ENCODE measurements at regions of chr7 and their contacts with region 1.

Region 1: DNA sequence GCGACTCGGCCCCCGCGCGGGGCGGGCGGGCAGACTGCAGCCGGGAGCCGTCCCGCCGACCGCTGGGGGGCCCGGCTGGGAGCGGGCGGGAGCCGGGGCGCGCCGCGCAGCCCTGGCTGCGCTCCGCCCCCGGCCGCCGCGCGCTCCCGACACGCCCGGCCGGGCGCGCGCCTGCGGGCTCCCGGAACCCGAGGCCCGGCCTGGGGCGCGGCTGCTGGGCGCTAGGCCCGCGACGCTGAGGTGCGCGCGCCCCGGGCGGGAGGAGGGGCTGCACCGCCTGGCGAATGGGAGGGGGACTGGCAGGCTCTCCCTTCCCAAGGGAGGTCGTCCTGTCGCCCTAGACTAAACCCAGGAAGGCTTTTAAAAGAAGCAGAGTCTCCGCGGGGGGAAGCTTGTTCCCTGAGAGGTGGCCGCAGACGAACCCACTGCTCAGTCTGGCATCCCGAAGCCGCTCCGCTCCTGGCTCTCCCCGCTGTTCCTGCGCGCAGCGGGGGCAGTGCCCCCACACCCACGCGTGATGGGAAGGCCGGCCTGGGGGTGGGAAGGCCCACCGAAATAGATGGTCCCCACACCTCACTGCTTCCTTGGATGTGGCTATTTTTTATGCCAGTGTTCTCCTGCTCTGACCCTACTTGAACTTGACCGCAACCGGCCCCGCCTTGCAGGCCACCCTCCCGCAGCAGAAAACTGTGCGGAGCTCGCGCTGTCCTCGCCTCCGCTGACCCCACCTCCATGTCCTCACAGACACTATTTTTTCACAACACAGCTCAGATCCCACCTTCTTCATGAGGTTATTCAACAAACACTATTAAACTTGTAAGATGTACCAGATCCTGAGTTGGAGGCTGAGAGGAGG is at the start of gene VOPP1:
- DNase-seq: peak; percentile 91
- H3K4me3 Mint-ChIP-seq: peak within 1 kb of the TSS; percentile 91
- H3K27ac Mint-ChIP-seq: peak within 1 kb of the TSS; percentile 93
- H3K4me1 Mint-ChIP-seq: peaks cover 64% of the 10 kb centered on the region
- H3K27me3 Mint-ChIP-seq: no peaks in the 10 kb centered on the region
- total RNA-seq, gene VOPP1: 87.4 and 90.6 TPM in 2 replicates

Region 2: DNA sequence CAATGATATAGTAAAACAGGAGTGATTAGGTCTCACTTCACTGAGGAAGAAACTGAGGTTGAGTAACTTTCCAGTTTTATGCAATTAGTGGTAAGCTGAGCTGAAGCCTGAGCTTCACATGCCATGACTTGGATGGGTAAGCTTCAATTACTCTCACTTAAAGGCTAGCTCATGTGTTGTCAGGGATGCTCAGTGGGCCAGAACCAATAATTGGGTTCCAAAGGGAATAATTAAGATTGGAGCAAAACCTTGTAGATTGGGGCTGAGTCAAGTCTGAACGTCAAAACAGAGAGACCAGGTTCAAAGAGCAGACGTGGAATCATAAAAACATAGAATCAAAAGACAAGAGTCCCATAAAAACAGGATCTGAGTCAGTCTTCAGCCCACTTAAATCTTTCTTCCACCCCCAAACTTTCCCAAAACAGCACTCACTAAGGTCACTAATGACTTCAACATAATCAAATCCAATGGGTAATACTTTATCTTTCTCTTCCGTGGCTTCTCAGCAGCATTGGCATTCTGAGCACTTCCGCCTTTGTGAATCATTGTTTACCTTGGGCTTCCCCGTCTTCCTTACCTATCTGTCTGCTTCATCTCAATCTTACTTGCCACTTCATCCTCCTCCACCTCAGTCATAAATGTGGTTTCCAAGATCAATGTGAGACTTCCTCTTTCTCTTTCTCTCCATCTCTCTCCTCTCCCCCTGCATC is 576.8 kb before region 1 on chr7:
- intact Hi-C with region 1: loop called (anchors 2 kb)
- DNase-seq: peak; percentile 81
- H3K4me3 Mint-ChIP-seq: peak overlapping the region; percentile 27
- H3K27ac Mint-ChIP-seq: peak overlapping the region; percentile 73
- H3K4me1 Mint-ChIP-seq: peaks cover 30% of the 10 kb centered on the region
- H3K27me3 Mint-ChIP-seq: peaks cover 12% of the 10 kb centered on the region

Region 3: GRCh38 chr7:55365675-55366460 is 206.7 kb before region 1 on chr7:
- intact Hi-C with region 1: loop called (anchors 1 kb)
- DNase-seq: peak; percentile 98
- H3K4me3 Mint-ChIP-seq: peak overlapping the region; percentile 96
- H3K27ac Mint-ChIP-seq: peak overlapping the region; percentile 96
- H3K4me1 Mint-ChIP-seq: peaks cover 32% of the 10 kb centered on the region
- H3K27me3 Mint-ChIP-seq: peaks cover 1% of the 10 kb centered on the region

Region 4: DNA sequence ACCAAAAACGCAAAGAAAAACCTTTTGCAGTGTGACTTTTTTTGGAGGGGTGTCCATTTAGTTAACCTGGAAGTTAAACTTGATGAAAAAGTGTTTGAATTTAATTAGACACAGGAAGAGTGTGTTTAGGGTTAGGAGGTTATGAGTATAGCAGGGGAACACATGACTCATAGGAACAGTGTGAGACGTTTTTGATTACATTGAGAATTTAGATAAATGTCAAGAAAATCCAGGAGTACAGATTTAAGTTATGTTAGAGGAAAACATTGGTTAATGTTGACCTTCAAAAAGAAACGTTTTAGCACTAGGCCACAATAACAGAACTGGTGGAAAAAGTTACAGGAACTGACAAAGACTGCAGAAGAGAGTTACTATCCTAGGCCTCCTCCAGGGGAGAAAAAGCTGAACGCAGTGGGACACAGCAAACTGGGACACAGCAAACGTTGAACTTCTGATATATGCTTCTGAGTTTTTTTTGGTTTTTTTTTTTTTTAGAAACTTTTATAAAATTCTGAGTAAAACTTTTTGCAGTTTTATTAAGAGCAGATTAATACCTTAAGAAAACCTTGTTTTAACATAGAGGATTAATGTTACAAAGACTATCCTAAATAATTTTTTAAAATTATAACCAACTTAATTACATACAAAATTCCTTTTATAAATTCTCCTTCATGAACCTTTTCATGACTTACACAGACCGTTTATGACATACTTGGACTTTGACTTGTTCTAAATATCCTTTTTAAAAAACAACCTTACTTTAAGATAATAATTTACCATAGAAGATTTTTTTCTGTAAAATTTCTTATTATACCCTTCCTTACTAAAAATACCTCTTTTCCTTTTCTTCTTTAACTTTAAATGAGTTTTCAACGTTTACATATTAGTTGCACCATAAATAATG is 185.3 kb before region 1 on chr7:
- intact Hi-C with region 1: no loop called
- DNase-seq: no peak
- H3K4me3 Mint-ChIP-seq: no peak overlapping the region
- H3K27ac Mint-ChIP-seq: peak overlapping the region; percentile 69
- H3K4me1 Mint-ChIP-seq: peaks cover 5% of the 10 kb centered on the region
- H3K27me3 Mint-ChIP-seq: no peaks in the 10 kb centered on the region

Region 5: GRCh38 chr7:55515569-55516279 is 56.9 kb before region 1 on chr7:
- intact Hi-C with region 1: loop called (anchors 2 kb)
- DNase-seq: no peak
- H3K4me3 Mint-ChIP-seq: peak overlapping the region; percentile 5
- H3K27ac Mint-ChIP-seq: peak overlapping the region; percentile 56
- H3K4me1 Mint-ChIP-seq: peaks cover 47% of the 10 kb centered on the region
- H3K27me3 Mint-ChIP-seq: no peaks in the 10 kb centered on the region

Region 6: DNA sequence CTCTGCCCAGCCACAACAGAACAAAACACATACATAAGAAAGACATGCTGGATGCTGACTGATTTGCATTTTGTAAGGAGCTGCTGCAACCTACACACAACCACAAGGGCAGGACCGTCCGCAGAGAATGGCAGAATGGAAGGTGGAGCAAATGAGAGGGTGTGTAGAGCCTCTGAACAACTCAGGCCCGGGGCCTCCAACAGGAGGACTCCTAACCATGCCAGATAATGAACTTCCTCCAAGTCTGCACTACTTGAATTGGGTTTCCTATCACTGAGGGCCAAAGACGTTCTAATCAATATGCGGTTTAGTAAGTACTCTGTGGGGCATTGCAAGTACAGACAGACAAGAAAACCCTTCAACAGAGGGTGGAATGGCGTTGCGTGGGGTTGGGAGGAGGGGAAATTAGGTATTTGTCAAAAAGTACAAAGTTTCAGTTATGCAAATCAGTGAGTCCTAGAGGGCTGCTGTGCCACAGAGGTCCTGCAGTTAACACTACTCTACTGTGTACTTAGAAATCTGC is 14.9 kb before region 1 on chr7:
- intact Hi-C with region 1: loop called (anchors 1 kb)
- DNase-seq: peak; percentile 61
- H3K4me3 Mint-ChIP-seq: peak overlapping the region; percentile 64
- H3K27ac Mint-ChIP-seq: peak overlapping the region; percentile 89
- H3K4me1 Mint-ChIP-seq: peaks cover 80% of the 10 kb centered on the region
- H3K27me3 Mint-ChIP-seq: no peaks in the 10 kb centered on the region

Region 7: DNA sequence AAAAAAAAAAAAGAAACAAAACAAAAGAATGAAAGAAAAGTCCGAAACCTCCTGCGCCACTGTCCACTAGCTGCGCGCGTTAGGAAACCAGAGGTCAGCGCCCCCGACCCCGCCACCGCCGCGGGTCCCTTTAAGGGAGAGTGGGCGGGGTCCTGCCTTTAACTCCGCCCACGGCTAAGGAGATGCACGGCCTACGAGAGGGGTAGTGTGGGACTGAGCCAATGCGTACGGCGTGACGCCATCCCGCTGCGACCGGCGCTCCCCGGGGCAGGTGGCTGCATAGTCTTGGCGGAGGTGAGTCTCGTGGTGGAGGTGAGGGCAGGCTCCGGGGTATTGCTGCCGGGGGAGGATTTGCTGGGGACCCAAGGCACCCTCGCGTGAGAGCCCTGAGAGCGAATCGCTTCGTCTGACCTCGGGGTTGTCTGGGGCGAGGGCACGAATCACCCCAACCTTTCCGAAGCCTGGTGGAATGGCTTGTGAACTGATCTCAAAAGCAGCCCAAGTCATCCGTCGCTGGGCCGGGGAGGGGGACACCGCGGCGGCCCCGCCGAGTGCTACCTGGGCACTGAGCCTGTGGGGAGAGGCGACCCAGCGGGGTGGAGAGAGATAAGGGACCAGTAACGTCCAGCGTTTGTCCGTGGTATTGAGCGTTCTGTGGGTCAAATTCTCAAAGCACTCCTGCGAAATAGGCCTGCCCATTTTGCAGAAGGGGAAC is 379.2 kb after region 1 on chr7 and contains the start of gene MRPS17:
- intact Hi-C with region 1: loop called (anchors 10 kb)
- DNase-seq: peak; percentile 98
- H3K4me3 Mint-ChIP-seq: peak within 1 kb of the TSS; percentile 98
- H3K27ac Mint-ChIP-seq: peak within 1 kb of the TSS; percentile 98
- H3K4me1 Mint-ChIP-seq: peaks cover 10% of the 10 kb centered on the region
- H3K27me3 Mint-ChIP-seq: no peaks in the 10 kb centered on the region
- total RNA-seq, gene MRPS17: 36.4 and 37.6 TPM in 2 replicates

Region 8: DNA sequence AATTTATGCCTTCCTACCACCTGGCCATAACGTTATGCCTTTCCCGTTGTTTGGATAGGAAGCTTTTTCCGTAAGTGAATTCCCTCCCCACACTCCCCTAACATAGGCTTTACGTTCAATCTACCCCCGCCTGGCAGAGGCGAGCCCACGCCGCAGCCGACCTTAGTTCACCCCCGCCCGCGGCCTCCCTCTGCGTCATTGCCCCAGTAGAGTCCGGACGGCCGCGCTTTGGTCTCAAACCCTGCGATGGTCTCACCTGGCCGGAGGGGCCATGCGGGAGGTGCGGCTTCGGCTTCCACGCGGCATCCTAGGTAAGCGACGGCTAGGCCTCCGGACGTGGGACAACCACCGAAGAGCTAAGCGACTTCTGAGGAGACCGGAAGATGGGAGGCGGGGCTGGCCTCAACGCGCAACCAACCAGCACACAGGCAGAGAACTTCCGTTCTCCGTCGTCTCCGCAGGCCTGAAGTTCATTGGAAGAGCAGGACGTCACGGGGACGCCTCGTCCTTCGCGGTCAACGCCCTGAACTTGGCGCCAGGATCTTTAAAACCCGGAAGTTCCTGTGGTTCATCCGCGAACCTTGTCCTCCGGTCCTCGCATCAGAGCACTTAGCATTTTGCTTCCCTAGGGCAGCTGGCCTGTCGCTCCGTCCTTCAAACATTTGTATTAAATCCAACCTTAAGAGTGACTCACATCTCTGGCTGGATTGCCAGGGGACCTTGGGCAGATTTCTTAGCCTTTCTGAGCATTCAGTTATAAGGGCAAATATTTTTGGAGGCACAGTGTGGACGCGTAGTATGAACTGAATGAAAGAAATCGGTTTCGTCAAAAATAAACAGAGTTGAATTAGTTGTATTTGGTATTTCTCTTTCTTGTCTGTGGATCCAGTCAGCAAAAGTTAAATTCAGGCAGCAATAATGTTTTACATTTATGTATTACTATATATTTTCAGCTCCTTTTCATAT is 533.8 kb after region 1 on chr7 and contains the start of gene CHCHD2:
- intact Hi-C with region 1: loop called (anchors 5 kb)
- DNase-seq: peak; percentile 98
- H3K4me3 Mint-ChIP-seq: peak within 1 kb of the TSS; percentile 95
- H3K27ac Mint-ChIP-seq: peak within 1 kb of the TSS; percentile 98
- H3K4me1 Mint-ChIP-seq: peaks cover 23% of the 10 kb centered on the region
- H3K27me3 Mint-ChIP-seq: no peaks in the 10 kb centered on the region
- total RNA-seq, gene CHCHD2: 627 and 634 TPM in 2 replicates